ENCODE measurements at regions of chr4 and their contacts with region 1.

Region 1: DNA sequence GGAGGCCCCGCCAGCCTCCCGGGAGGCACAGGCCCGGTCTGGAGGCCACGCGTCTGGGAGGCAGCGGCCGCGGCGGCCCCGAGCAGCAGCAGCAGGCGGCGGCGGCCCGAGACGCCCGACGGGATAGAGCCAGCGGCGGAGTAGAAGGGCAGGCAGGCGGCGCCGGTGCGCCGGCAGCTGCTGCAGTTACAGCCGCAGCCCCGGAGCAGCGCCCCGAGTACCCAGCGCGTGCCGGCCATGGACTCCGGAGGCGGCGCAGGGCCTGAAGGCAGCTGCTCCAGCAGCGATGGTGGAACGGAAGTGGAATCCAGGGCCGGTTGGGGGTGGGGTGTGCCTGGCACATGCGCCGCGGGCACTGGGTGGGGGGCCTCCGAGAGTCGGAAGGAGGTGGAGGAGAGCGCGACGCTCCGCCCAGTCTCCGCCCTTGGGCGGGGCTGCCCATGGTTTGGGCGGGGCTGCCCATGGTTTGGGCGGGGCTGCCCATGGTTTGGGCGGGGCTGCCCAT is at the start of gene GRSF1:
- DNase-seq: peak; percentile 91 to 93
- H3K4me3 ChIP-seq: peak within 1 kb of the TSS; percentile 87 to 99 (median 98)
- H3K27ac ChIP-seq: peak within 1 kb of the TSS; percentile 78 to 91 (median 89)
- H3K4me1 ChIP-seq: peaks cover 3 to 12% of the 10 kb centered on the region in 2 donors
- H3K27me3 ChIP-seq: no peaks in the 10 kb centered on the region
- CTCF ChIP-seq: peak in 2 of 6 experiments; percentile 15 to 24
- POLR2A ChIP-seq: peak in 1 of 2 donors; percentile 75
- total RNA-seq, gene GRSF1: 59.7 to 69.6 (median 67.0) TPM

Region 2: DNA sequence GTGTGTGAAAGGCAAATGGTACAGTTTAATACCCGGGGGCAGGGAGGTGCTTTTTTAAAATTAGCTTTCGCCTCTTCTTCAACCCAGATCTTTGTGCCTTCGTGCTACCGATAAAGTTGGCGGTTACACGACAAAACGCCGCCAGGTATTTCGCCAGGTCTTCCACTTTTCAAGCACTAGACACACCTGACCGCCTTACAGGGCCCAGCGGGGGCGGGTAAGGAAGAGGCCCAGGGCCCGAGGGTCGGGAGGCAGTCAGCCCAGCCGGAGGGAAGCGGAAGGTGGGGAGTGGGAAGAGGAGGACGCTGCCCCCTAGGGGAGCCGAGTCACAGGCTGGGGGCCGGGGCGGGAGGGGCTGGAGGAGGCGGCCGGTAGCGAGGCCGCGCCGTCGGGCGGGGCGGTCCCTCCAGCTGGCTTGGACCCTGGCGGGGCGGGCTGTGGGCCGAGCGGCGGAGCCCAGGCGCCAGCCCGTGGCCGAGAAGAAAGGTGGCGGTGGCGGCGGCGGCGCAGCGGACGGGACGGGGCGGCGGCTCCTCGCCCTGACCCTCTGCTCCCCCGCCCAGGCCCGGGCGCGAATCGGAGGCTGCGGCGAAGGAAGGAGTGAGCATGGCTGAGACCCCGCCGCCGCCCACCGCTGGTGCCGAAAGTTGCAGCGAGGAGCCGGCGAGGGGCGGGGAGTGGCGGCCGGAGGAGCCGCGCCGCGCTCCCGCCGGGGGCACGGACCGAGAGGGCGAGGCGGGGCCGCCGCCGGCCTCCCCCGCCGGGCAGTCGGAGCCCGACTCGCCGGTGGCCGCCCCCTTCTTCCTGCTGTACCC is 135.1 kb before region 1 on chr4:
- intact Hi-C with region 1: loop called (anchors 10 kb)
- DNase-seq: peak; percentile 95 to 96
- H3K4me3 ChIP-seq: peak overlapping the region; percentile 75 to 86 (median 78)
- H3K27ac ChIP-seq: peak overlapping the region; percentile 82 to 98 (median 94)
- H3K4me1 ChIP-seq: peaks cover 16 to 31% of the 10 kb centered on the region in 2 donors
- H3K27me3 ChIP-seq: no peaks in the 10 kb centered on the region
- CTCF ChIP-seq: peak in 3 of 6 experiments; percentile 22 to 46 (median 29)
- POLR2A ChIP-seq: peak in 1 of 2 donors; percentile 67

Region 3: DNA sequence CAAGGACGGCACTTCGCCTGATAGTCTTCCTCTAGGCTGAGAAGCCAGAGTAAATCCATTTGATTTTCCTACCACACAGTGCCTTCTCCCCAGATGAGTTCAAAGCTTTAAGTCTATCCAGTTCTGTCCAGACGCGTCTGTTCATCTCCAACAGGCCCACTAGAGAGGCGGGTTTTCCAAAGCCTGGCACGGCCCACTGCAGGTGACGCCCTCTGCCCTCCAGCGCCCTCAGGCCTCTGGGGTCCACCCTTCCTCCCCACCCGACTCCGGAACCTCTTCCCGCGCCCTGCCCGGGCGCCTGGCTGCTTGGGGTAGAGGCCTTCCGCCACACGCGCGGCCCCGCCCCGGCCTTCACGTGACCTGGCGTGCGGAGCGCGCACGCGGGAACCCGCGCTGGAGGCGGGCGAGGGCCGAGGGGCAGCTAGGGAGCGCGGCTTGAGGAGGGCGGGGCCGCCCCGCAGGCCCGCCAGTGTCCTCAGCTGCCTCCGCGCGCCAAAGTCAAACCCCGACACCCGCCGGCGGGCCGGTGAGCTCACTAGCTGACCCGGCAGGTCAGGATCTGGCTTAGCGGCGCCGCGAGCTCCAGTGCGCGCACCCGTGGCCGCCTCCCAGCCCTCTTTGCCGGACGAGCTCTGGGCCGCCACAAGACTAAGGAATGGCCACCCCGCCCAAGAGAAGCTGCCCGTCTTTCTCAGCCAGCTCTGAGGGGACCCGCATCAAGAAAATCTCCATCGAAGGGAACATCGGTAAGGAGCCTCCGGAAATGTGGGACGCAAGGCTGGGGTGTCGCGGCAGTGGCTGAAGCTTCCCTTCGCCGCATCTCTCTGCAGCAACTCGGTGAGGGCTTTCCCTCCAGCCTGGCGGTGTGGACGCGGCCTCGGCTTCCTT is 153.8 kb after region 1 on chr4 and contains the start of gene DCK:
- intact Hi-C with region 1: loop called (anchors 10 kb)
- DNase-seq: peak; percentile 90
- H3K4me3 ChIP-seq: peak within 1 kb of the TSS; percentile 59 to 86 (median 76)
- H3K27ac ChIP-seq: peak within 1 kb of the TSS; percentile 80 to 91 (median 82)
- H3K4me1 ChIP-seq: peaks cover 7 to 13% of the 10 kb centered on the region in 2 donors
- H3K27me3 ChIP-seq: no peaks in the 10 kb centered on the region
- CTCF ChIP-seq: peak in 1 of 6 experiments; percentile 7
- POLR2A ChIP-seq: peak in 1 of 2 donors; percentile 86
- total RNA-seq, gene DCK: 10.9 to 15.2 (median 14.6) TPM